WTC11 (cell line): ENCODE measurements at regions of chr18 and their contacts with region 1.

Region 1: DNA sequence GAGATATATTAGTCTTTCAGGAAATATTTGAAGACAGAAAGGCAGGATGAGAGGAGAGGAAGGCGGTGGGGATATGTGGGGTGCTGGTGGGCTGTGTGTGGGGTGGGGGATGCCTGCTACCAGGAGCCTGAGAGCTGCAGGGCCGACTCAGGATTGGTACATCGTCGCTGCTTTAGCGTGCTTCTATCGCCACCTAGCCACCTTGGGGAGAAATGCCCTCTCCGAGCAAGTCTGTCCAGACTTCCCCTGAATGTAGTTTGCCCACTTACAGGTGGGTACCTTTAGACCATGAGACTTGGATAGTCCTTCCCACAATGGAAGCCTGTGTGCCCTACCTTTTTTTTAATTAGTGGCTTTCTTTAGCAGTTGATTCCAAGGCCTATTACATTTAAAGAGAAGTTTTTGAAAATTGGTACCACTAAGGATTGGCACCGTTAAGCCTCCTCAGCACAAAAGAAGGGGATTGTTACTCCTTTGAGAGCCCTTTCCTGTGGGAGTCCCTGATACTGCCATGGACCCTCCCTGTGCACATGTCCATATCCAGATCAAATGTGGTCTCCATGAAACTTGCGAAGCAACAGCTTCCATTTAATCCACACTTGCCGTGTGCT is 114.1 kb upstream of the NDUFV2 start:
- DNase-seq: peak; percentile 78
- ATAC-seq: peak; percentile 99
- H3K4me3 Mint-ChIP-seq: no peak overlapping the region
- H3K27ac Mint-ChIP-seq: no peak overlapping the region
- H3K4me1 Mint-ChIP-seq: peaks cover 9% of the 10 kb centered on the region; the same call in 1 of the 2 replicates
- H3K27me3 Mint-ChIP-seq: no peaks in the 10 kb centered on the region; the same call in 1 of the 2 replicates
- CTCF ChIP-seq: peak; percentile 80

Region 2: GRCh38 chr18:8654503-8655451 is 333.6 kb before region 1 on chr18:
- CTCF ChIA-PET with region 1: interaction called, 23 read pairs
- POLR2A ChIA-PET with region 1: no interaction called
- DNase-seq: no peak
- ATAC-seq: no peak
- H3K4me3 Mint-ChIP-seq: no peak overlapping the region
- H3K27ac Mint-ChIP-seq: peak overlapping the region; percentile 81
- H3K4me1 Mint-ChIP-seq: peaks cover 19% of the 10 kb centered on the region
- H3K27me3 Mint-ChIP-seq: no peaks in the 10 kb centered on the region
- CTCF ChIP-seq: peak; percentile 37

Region 3: GRCh38 chr18:8661754-8662569 is 326.4 kb before region 1 on chr18:
- CTCF ChIA-PET with region 1: interaction called, 18 read pairs
- POLR2A ChIA-PET with region 1: no interaction called
- DNase-seq: peak; percentile 72
- ATAC-seq: peak; percentile 82
- H3K4me3 Mint-ChIP-seq: peak overlapping the region; percentile 49
- H3K27ac Mint-ChIP-seq: peak overlapping the region; percentile 69
- H3K4me1 Mint-ChIP-seq: peaks cover 45% of the 10 kb centered on the region
- H3K27me3 Mint-ChIP-seq: peaks cover 2% of the 10 kb centered on the region; the same call in 1 of the 2 replicates
- CTCF ChIP-seq: no peak

Region 4: DNA sequence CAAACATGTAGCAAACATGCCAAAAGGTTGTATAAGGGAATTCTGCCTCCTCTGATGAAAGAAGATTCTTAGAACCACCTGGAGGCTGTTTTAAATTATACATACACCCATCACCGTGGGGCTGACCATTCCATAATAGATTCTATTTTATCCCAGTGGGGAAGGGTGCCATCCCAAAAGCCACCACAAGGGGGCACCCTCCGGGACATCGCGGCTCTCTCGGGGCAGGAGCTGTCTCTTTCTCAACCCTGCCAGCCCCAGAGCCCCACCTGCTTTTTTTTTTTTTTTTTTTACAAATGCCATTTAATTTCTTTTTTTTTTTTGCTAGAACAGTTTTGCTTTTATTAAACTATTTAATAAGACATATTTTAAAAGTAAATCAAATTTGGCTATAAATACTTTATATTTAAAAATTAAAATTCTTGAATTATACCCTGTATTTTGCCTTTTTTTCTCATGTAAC is 291.6 kb before region 1 on chr18:
- CTCF ChIA-PET with region 1: interaction called, 21 read pairs
- POLR2A ChIA-PET with region 1: no interaction called
- DNase-seq: peak; percentile 83
- ATAC-seq: peak; percentile 85
- H3K4me3 Mint-ChIP-seq: no peak overlapping the region
- H3K27ac Mint-ChIP-seq: no peak overlapping the region
- H3K4me1 Mint-ChIP-seq: peaks cover 2% of the 10 kb centered on the region; the same call in 1 of the 2 replicates
- H3K27me3 Mint-ChIP-seq: no peaks in the 10 kb centered on the region
- CTCF ChIP-seq: peak; percentile 92

Region 5: DNA sequence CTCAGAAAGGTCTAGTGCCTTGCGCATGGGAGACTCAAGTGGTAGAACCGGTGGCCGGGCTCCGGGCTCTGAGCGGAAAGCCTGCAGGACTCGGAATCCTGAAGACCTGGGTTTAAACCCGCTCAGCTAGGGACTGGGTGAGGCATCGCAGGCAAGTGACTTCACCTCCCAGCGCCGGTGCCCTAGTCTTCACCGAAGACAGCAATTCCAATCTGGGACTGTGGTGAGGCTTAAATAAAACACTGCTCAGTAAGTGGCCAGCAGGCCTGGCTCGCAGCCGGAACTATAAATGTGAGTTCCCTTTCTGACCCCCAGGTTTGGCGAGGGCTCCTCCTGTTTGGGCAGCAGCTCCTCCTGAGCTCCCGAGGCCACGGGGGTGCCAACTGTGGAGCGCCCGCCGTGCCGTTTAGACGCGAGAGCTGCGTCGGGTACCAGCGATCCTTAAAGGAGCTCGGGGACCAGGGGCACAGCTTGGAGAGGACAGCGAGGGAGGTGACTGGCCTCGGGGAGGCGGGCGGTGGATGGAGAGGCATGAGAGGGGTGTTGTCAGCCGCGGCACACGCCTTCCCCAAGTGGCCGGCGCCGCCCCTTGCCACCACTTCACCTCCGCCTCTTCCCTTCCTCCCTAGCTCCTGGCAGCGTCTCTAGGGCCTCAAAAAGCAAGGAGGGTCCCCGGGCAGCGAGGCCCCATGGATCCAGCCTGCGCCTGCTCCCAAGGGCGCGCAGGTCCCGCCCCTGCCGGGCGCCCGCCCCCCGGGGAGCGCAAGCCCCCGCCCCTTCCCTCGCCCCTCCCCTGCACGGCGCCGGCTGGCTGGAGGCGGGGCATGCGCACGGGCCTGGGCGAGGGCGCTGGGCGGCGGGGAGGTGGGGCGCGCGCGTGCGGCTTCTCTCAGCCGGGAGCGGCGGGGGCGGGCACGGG is 283.7 kb before region 1 on chr18:
- CTCF ChIA-PET with region 1: interaction called, 28 read pairs
- POLR2A ChIA-PET with region 1: no interaction called
- DNase-seq: peak; percentile 82
- ATAC-seq: peak; percentile 69
- H3K4me3 Mint-ChIP-seq: peak overlapping the region; percentile 80
- H3K27ac Mint-ChIP-seq: peak overlapping the region; percentile 68
- H3K4me1 Mint-ChIP-seq: peaks cover 47% of the 10 kb centered on the region
- H3K27me3 Mint-ChIP-seq: peaks cover 19% of the 10 kb centered on the region
- CTCF ChIP-seq: no peak

Region 6: DNA sequence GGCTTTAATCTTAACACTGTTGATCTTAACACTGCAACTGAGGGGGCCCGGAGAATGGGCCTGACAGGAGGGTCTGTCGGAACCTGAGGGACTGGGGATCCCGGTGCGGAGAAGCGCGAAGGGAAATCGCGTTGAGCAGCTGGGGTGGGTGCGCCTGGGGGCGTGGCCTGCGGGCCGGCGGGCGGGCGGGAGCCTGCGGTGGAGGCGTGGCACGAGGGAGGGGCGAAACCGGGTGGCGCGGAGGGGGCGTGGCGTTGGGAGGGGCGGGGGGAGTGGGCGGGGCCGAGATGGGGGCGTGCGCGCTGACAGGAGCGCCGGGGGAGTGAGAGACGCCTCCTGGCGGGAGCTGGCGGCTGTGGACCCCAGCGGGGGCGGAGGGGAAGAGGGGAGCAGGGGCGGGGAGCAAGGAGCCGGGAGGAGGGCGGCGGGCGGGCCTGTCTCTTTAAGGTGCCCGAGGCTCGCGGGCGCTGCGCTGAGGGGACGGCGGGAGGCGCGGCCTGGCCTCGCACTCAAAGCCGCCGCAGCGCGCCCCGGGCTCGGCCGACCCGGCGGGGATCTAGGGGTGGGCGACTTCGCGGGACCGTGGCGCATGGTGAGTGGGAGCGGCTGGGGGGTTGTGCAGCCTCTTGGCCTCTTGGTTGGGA is 346.1 kb after region 1 on chr18 and contains the start of gene TWSG1:
- CTCF ChIA-PET with region 1: interaction called, 12 read pairs
- POLR2A ChIA-PET with region 1: no interaction called
- DNase-seq: peak; percentile 96
- ATAC-seq: peak; percentile 92
- H3K4me3 Mint-ChIP-seq: peak within 1 kb of the TSS; percentile 86
- H3K27ac Mint-ChIP-seq: peak within 1 kb of the TSS; percentile 94
- H3K4me1 Mint-ChIP-seq: peaks cover 10% of the 10 kb centered on the region; the same call in 1 of the 2 replicates
- H3K27me3 Mint-ChIP-seq: peaks cover 27% of the 10 kb centered on the region
- CTCF ChIP-seq: 0 out of 2 replicates have a peak, but pooled peaks have one; percentile 12
- total RNA-seq, gene TWSG1: 18.2 to 19.3 TPM (median 18.3 TPM) in 3 replicates